Activated CD8-positive, alpha-beta T cell treated with anti-CD3 and anti-CD28 coated beads for 36 hours (primary cell): ENCODE measurements at regions of chr13 and their contacts with region 1.

Region 1: DNA sequence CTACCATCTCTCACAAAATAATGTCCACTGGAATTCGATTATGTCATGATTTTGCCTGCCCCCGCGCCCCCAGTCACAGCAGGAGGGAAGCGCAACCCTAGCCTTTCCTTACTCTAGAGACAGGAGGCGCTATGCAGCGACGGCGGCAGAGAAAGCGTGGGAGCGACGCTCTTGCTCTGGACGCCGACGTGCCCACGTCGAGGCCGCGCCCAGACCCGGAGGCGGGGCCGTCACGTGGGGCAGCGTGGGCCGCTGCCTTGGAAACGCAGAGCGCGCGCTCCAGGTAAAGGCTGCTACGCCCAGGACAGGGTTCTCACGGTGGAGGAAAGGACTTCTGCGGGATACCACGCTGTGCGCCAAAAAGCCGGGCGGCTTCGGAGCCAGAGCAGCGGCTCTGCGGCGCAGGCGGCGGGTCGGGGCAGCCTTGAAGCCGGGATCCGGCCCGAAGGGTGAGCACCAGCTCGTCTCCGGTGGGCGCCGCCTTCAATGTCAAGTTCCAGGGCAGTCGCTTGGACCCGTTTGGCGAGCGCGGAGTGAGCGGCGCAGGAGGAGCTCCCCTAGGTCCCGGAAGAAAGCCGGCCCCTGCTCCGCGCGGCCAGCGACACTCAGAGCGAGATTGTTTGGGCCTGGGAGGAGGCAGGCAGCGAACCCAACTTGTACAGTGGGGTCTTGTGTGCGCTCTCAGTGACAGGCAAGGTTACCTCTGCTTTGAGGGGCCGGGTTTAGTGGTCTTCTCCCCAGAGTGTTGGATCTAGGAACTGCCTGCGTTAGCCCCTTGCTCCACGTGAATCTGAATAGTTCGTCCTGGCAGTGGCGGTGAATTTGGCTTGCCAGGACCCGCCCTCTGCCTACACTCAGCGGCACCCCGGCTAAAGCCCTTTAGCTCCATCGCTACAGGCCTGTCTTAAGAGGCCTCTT is 121.7 kb downstream of the MRPL57 start:
- DNase-seq: peak; percentile 87
- ATAC-seq: peak; percentile 93
- H3K4me3 Mint-ChIP-seq: peak overlapping the region; percentile 90
- H3K27ac Mint-ChIP-seq: peak overlapping the region; percentile 61
- H3K4me1 Mint-ChIP-seq: peaks cover 23% of the 10 kb centered on the region
- H3K27me3 Mint-ChIP-seq: no peaks in the 10 kb centered on the region
- CTCF ChIP-seq: peak; percentile 90

Region 2: DNA sequence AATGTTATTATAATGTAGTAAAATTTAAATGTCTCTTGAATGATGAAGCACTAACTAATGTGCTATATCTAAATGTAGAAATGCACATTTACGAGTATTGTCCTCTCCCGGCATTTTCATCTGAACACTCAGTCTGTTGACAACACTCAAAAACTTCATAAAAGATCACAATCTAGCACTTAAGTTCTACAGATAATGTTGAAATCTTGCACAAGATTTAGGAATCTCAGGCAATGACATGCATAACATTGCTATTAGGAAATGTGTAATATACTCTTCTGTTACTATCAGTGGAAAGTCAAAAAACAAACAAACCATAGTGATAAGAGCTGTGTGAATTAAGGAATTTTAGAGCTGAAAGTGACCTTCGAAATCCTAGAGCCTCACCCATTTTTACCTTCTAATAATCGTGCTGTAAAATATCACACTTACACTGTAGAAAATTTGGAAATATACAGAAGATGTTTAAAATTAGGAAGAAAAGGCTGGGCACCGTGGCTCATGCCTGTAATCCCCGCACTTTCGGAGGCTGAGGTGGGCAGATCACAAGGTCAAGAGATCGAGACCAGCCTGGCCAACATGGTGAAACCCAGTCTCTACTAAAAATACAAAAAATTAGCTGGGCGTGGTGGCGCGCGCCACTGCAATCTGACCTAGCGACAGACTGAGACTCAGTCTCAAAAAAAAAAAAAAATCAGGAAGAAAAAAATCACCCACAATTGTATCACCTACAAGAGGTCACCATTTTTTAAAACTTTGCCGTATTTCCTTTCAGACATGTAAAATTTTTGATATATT is 357.9 kb before region 1 on chr13:
- CTCF ChIA-PET with region 1: no interaction called
- POLR2A ChIA-PET with region 1: no interaction called
- intact Hi-C with region 1: no loop called
- DNase-seq: no peak
- ATAC-seq: no peak
- H3K4me3 Mint-ChIP-seq: no peak overlapping the region
- H3K27ac Mint-ChIP-seq: no peak overlapping the region
- H3K4me1 Mint-ChIP-seq: no peaks in the 10 kb centered on the region
- H3K27me3 Mint-ChIP-seq: peaks cover 14% of the 10 kb centered on the region
- CTCF ChIP-seq: no peak

Region 3: GRCh38 chr13:21310221-21310620 is 12.0 kb after region 1 on chr13:
- CTCF ChIA-PET with region 1: interaction called, 23 read pairs
- POLR2A ChIA-PET with region 1: no interaction called
- intact Hi-C with region 1: no loop called
- DNase-seq: no peak
- ATAC-seq: no peak
- H3K4me3 Mint-ChIP-seq: no peak overlapping the region
- H3K27ac Mint-ChIP-seq: no peak overlapping the region
- H3K4me1 Mint-ChIP-seq: peaks cover 8% of the 10 kb centered on the region
- H3K27me3 Mint-ChIP-seq: no peaks in the 10 kb centered on the region
- CTCF ChIP-seq: no peak

Region 4: DNA sequence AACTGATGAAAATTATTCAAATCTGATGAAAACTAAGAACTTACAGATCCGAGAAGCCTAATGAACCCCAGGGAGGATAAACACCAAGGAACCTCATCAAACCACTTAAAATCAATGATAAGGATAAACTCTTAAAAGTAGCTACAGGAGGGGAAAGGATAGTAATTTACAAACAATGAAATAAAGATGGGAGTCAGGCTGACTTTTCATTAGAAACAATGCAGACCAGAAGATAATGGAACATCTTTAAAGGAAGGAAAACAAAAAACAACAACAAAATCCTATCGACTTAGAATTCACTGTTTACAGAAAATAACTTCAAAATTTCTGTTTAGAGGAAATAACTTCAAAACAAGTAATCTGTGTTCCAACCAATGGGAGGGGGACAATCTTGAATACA is 87.5 kb after region 1 on chr13:
- CTCF ChIA-PET with region 1: interaction called, 19 read pairs
- POLR2A ChIA-PET with region 1: no interaction called
- intact Hi-C with region 1: no loop called
- DNase-seq: no peak
- ATAC-seq: no peak
- H3K4me3 Mint-ChIP-seq: no peak overlapping the region
- H3K27ac Mint-ChIP-seq: no peak overlapping the region
- H3K4me1 Mint-ChIP-seq: peaks cover 19% of the 10 kb centered on the region
- H3K27me3 Mint-ChIP-seq: no peaks in the 10 kb centered on the region
- CTCF ChIP-seq: no peak